Dorsolateral prefrontal cortex (tissue), 120 donors: ENCODE measurements at regions of chr3 and their contacts with region 1.

Region 1: GRCh38 chr3:73086071-73086494 is 24.6 kb downstream of the EBLN2 start:
- DNase-seq: peak in 6 of 10 donors; percentile 32 to 57 (median 43)
- H3K4me3 ChIP-seq: peak overlapping the region in 16 of 59 donors; percentile 2 to 47 (median 22)
- H3K27ac ChIP-seq: no peak overlapping the region
- H3K27me3 ChIP-seq: no peaks in the 10 kb centered on the region
- CTCF ChIP-seq: peak; percentile 59 to 94 (median 81)

Region 2: GRCh38 chr3:71710906-71711494 is 1375.1 kb before region 1 on chr3:
- intact Hi-C with region 1: loop called in 1 of 2 experiments (anchors 10 kb)
- DNase-seq: no peak
- H3K4me3 ChIP-seq: no peak overlapping the region
- H3K27ac ChIP-seq: peak overlapping the region in 16 of 59 donors; percentile 4 to 94 (median 40)
- H3K27me3 ChIP-seq: no peaks in the 10 kb centered on the region
- CTCF ChIP-seq: peak; percentile 32 to 86 (median 72)

Region 3: GRCh38 chr3:71885006-71885405 is 1201.1 kb before region 1 on chr3:
- intact Hi-C with region 1: loop called in 1 of 2 experiments (anchors 10 kb)
- DNase-seq: no peak
- H3K4me3 ChIP-seq: no peak overlapping the region
- H3K27ac ChIP-seq: no peak overlapping the region
- H3K27me3 ChIP-seq: peaks cover 0 to 5% (median 0%) of the 10 kb centered on the region in 45 donors
- CTCF ChIP-seq: no peak

Region 4: GRCh38 chr3:72426618-72427397 is 659.3 kb before region 1 on chr3:
- intact Hi-C with region 1: no loop called
- DNase-seq: no peak
- H3K4me3 ChIP-seq: peak overlapping the region in 2 of 59 donors; percentile 2 to 17
- H3K27ac ChIP-seq: peak overlapping the region in 9 of 59 donors; percentile 0 to 51 (median 18)
- H3K27me3 ChIP-seq: no peaks in the 10 kb centered on the region
- CTCF ChIP-seq: no peak

Region 5: GRCh38 chr3:72847751-72848702 is 238.1 kb before region 1 on chr3 and contains the start of gene SHQ1:
- intact Hi-C with region 1: loop called in 1 of 2 experiments (anchors 5 kb)
- DNase-seq: peak; percentile 88 to 95 (median 93)
- H3K4me3 ChIP-seq: peak within 1 kb of the TSS; percentile 64 to 99 (median 88)
- H3K27ac ChIP-seq: peak within 1 kb of the TSS in 37 of 59 donors; percentile 6 to 84 (median 55)
- H3K27me3 ChIP-seq: peaks cover 0 to under 1% (median 0%) of the 10 kb centered on the region in 45 donors
- CTCF ChIP-seq: peak in 22 of 56 donors; percentile 6 to 45 (median 24)
- total RNA-seq, gene SHQ1: 14.8 to 39.4 (median 25.9) TPM

Region 6: DNA sequence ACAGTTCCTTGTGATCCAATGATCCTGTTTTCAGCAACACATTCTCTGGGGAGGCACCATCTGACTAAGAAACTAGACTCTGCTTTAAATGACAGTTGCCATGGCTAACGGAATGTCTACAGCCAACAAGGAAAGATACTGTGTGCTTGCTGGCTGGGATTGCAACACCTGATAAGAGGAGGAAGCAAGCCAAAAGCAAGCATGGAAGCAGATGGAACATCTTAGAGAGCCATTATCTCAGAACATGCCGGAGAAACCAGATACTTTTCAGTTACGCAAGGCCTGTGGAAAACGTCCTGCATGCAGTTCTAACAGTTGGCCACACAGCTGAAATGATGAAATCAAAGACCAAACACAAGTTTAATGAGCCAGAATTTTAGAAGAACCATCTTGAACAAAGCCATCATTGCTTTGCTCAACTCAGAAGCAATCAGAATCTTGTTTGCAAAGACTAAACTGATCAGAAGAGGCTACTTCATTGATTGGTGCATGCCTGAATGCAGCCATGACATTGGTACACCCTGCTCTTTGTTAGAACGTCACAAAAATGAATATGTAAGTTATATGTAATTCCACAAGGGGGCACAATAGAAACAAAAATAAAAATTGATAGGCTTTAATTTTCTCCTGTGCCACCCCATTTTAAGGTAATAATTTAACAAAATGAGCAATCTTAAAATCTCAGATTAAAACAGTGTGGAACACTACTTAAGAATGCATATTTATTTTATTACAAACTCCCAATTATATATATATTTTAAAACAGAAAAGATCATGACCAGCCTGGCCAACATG is 147.4 kb before region 1 on chr3:
- intact Hi-C with region 1: loop called (anchors 10 kb)
- DNase-seq: peak in 3 of 10 donors; percentile 7 to 30 (median 10)
- H3K4me3 ChIP-seq: peak overlapping the region in 17 of 59 donors; percentile 5 to 34 (median 16)
- H3K27ac ChIP-seq: peak overlapping the region in 58 of 59 donors; percentile 10 to 86 (median 74)
- H3K27me3 ChIP-seq: no peaks in the 10 kb centered on the region
- CTCF ChIP-seq: peak in 55 of 56 donors; percentile 44 to 89 (median 73)

Region 7: DNA sequence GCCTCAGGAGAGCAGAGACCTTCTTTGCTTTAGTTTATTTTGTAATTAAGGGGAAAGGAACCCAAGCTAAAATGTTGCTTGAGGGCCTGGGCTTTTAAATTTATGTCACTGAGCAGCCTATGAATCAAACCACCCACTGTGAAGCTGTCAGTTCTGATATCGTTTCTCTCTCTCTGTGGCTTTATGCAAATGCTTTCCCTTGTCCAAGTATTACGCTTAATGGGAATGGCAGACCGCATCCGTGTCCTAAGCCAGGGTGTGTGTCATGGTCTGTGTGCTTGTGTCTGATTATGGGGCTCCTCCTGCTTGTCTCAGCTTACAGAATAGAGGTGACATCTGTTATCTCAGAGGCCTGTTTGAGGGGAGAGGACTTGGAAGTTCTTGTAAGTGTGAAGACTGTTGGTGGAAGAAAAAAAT is 57.7 kb after region 1 on chr3:
- intact Hi-C with region 1: no loop called
- DNase-seq: no peak
- H3K4me3 ChIP-seq: no peak overlapping the region
- H3K27ac ChIP-seq: no peak overlapping the region
- H3K27me3 ChIP-seq: no peaks in the 10 kb centered on the region
- CTCF ChIP-seq: no peak

Region 8: GRCh38 chr3:73192035-73192738 is 106.1 kb after region 1 on chr3:
- intact Hi-C with region 1: no loop called
- DNase-seq: no peak
- H3K4me3 ChIP-seq: no peak overlapping the region
- H3K27ac ChIP-seq: no peak overlapping the region
- H3K27me3 ChIP-seq: no peaks in the 10 kb centered on the region
- CTCF ChIP-seq: peak in 4 of 56 donors; percentile 5 to 12 (median 10)